K562 (cell line): ENCODE measurements at regions of chr14 and their contacts with region 1.

Region 1: GRCh38 chr14:53055003-53055402 is 98.1 kb downstream of the DDHD1 start:
- DNase-seq: peak; percentile 21 to 41 (median 33)
- ATAC-seq: peak; percentile 76
- H3K4me3 ChIP-seq: no peak overlapping the region
- H3K27ac ChIP-seq: no peak overlapping the region
- H3K4me1 ChIP-seq: no peaks in the 10 kb centered on the region
- H3K27me3 ChIP-seq: no peaks in the 10 kb centered on the region
- CTCF ChIP-seq: peak; percentile 34 to 53 (median 52); a peak in 4 of 6 replicates
- EP300 ChIP-seq: no peak
- POLR2A ChIP-seq: no peak
- RAD21 ChIP-seq: peak; percentile 40 to 75

Region 2: GRCh38 chr14:52835122-52835903 is 219.7 kb before region 1 on chr14:
- CTCF ChIA-PET with region 1: no interaction called
- POLR2A ChIA-PET with region 1: no interaction called
- in situ Hi-C with region 1: no loop called
- intact Hi-C with region 1: no loop called
- DNase-seq: peak in 2 of 4 experiments; percentile 12 to 40
- ATAC-seq: peak; percentile 87
- H3K4me3 ChIP-seq: no peak overlapping the region
- H3K27ac ChIP-seq: no peak overlapping the region
- H3K4me1 ChIP-seq: no peaks in the 10 kb centered on the region; a peak in 2 of 5 replicates
- H3K27me3 ChIP-seq: no peaks in the 10 kb centered on the region; a peak in 1 of 5 replicates
- CTCF ChIP-seq: no peak
- EP300 ChIP-seq: no peak
- POLR2A ChIP-seq: no peak
- RAD21 ChIP-seq: no peak

Region 3: GRCh38 chr14:52923902-52924575 is 131.0 kb before region 1 on chr14:
- CTCF ChIA-PET with region 1: no interaction called
- POLR2A ChIA-PET with region 1: no interaction called
- in situ Hi-C with region 1: no loop called
- intact Hi-C with region 1: loop called (anchors 10 kb)
- DNase-seq: no peak
- ATAC-seq: peak; percentile 51; the same call in 2 of the 3 replicates
- H3K4me3 ChIP-seq: no peak overlapping the region
- H3K27ac ChIP-seq: no peak overlapping the region
- H3K4me1 ChIP-seq: no peaks in the 10 kb centered on the region
- H3K27me3 ChIP-seq: no peaks in the 10 kb centered on the region
- CTCF ChIP-seq: peak in 1 of 3 experiments; percentile 28; a peak in 1 of 6 replicates
- EP300 ChIP-seq: no peak
- POLR2A ChIP-seq: no peak
- RAD21 ChIP-seq: peak in 1 of 2 experiments; percentile 40; a peak in 2 of 4 replicates

Region 4: DNA sequence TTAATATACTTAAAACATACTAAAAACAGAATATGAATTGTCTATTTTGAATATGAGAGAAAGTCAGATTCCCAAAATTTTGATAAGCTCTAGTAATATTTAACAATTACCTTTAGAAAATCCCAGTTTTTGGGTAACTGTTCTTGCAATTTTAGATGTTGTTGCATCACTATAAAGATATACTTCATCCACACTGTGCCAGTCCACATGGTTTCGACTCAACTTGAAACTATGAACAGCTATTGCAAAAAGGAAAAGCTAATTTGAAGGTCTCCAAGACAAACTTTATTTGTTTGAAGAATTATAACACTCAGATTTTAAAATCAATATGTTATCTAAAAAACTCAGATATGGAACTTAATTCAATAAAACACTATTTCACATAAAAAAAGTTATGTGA is 38.2 kb after region 1 on chr14:
- CTCF ChIA-PET with region 1: no interaction called
- POLR2A ChIA-PET with region 1: no interaction called
- in situ Hi-C with region 1: no loop called
- intact Hi-C with region 1: no loop called
- DNase-seq: no peak
- ATAC-seq: no peak
- H3K4me3 ChIP-seq: no peak overlapping the region
- H3K27ac ChIP-seq: no peak overlapping the region
- H3K4me1 ChIP-seq: no peaks in the 10 kb centered on the region
- H3K27me3 ChIP-seq: no peaks in the 10 kb centered on the region
- CTCF ChIP-seq: no peak
- EP300 ChIP-seq: no peak
- POLR2A ChIP-seq: no peak
- RAD21 ChIP-seq: no peak

Region 5: GRCh38 chr14:53306267-53306721 is 251.3 kb after region 1 on chr14:
- CTCF ChIA-PET with region 1: no interaction called
- POLR2A ChIA-PET with region 1: no interaction called
- in situ Hi-C with region 1: no loop called
- intact Hi-C with region 1: loop called (anchors 5 kb)
- DNase-seq: peak; percentile 28 to 35 (median 31)
- ATAC-seq: peak; percentile 74
- H3K4me3 ChIP-seq: no peak overlapping the region
- H3K27ac ChIP-seq: no peak overlapping the region
- H3K4me1 ChIP-seq: no peaks in the 10 kb centered on the region
- H3K27me3 ChIP-seq: no peaks in the 10 kb centered on the region
- CTCF ChIP-seq: peak; percentile 47 to 72 (median 70)
- EP300 ChIP-seq: no peak
- POLR2A ChIP-seq: no peak
- RAD21 ChIP-seq: peak; percentile 66 to 73